ENCODE measurements at regions of chr17 and their contacts with region 1.

Region 1: DNA sequence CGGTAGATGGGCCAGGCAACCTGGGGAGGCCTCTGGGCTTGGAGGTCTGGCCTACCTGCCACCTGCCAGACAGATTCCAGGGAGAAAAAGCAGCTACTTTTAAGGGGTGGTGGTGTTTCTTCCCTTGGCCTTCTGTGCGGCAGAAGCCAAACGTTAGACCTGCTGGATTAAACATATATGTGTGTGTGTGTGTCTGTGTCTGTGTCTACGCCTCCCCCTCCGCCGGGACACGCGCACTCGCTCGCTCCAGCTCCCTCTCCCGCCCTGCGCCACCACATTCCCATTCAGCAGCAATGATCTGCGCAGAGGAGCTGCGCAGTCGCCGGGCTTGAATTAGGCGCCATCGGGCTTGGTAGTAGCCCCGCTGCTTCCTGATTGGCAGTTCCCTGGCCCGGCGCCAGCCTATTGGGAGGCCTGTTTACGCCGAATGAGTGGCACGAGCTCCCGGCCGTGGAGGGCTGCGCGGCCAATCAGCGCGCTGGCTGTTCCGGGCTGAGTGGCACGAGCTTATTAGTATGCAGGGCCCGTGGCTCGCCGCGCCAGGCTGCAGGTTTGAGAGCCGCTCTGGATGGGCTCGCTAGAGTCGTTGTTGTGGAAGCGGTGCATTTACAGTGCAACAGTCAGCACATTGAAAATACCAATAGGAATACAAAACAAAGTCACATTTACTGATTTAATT is at the start of gene BAHCC1:
- DNase-seq: peak; percentile 100
- H3K4me3 ChIP-seq: peak within 1 kb of the TSS; percentile 74
- H3K27ac ChIP-seq: peak within 1 kb of the TSS; percentile 75
- H3K4me1 ChIP-seq: peaks cover 42% of the 10 kb centered on the region
- CTCF ChIP-seq: no peak
- total RNA-seq, gene BAHCC1: 1.4 and 5.2 TPM in 2 replicates

Region 2: GRCh38 chr17:81294856-81295680 is 100.0 kb before region 1 on chr17 and contains the start of gene SLC38A10:
- CTCF ChIA-PET with region 1: interaction called, 3 read pairs
- POLR2A ChIA-PET with region 1: interaction called, 4 read pairs
- intact Hi-C with region 1: loop called (anchors 5 kb)
- DNase-seq: peak; percentile 95
- H3K4me3 ChIP-seq: peak within 1 kb of the TSS; percentile 78
- H3K27ac ChIP-seq: peak within 1 kb of the TSS; percentile 49
- H3K4me1 ChIP-seq: peaks cover 28% of the 10 kb centered on the region
- CTCF ChIP-seq: peak; percentile 37; the same call in 1 of the 2 replicates
- total RNA-seq, gene SLC38A10: 50.5 and 56.0 TPM in 2 replicates

Region 3: DNA sequence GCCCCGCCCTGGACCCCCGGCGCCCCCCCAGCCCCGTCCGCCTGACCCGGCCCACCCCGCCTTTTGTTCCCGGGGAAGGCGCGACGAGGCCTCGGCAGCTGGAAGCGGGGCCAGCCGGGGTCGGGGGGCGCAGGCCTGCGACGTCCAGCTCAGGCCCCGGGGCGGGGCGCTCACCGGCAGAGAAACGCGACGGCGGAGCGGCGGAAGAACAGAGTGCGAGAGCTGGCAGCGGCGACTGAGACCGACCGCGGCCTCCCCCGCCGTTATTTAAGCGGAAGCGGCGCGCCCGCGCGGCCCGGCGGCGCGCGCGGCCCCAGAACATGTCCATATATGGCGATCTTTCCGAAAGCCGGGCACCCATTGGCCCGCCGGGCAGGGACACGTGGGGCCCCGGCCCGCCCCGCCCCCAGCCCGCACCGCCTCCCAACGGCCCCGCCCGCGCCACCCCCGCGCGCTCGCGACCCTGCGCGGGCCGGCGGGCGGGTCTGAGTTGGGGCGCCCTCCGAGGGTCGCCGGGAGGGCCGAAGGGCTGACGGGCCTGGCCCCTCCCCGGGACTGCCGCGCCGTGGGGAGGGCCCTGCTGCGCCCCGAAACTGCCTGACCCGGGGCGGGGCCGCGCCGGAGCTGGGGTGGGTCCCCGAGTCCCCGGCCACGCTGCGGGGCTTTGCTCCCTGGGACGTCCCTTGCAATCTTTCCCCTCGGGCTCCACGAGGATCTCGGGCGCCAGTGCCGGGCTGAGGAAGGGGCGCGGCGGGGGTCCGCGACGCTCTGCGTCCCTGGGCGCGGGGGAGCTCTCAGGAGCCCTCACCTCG is 117.7 kb after region 1 on chr17 and contains the start of gene ACTG1:
- CTCF ChIA-PET with region 1: no interaction called
- POLR2A ChIA-PET with region 1: interaction called, 5 read pairs
- intact Hi-C with region 1: loop called (anchors 10 kb)
- DNase-seq: peak; percentile 98
- H3K4me3 ChIP-seq: peak within 1 kb of the TSS; percentile 90
- H3K27ac ChIP-seq: peak within 1 kb of the TSS; percentile 89
- H3K4me1 ChIP-seq: peaks cover 58% of the 10 kb centered on the region
- CTCF ChIP-seq: no peak
- total RNA-seq, gene ACTG1: 2,245 and 2,707 TPM in 2 replicates

Region 4: DNA sequence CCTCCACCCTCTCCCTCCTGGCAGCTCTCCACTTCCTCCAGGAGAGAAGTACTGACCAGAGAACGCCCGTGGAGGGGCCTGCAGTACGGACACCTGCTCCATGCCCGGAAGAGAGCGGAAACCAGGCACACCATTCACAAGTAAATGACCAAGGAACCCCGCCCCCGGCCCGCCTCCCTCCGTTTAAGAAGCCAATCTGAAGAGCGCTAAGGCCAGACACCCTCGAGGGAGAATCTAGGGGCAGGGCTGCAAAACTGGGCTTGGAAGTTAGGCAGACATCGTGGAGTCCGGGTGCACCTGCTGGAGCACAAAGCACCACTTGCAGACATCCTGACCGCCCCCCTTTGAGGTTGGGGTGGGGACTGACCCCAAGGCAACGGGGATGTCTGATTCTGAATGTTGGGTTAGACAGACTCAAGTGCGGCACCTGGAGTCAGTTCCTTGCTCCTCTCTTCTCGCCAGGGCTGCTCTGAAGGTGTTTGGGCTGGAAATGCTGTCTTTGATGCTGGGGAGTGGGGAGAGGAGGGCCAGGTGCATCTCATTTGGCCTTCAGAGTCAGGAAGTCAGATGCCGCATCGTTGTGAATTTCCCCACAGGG is 158.1 kb after region 1 on chr17:
- CTCF ChIA-PET with region 1: no interaction called
- POLR2A ChIA-PET with region 1: interaction called, 4 read pairs
- intact Hi-C with region 1: loop called (anchors 2 kb)
- DNase-seq: peak; percentile 94
- H3K4me3 ChIP-seq: peak overlapping the region; percentile 88
- H3K27ac ChIP-seq: peak overlapping the region; percentile 80
- H3K4me1 ChIP-seq: peaks cover 30% of the 10 kb centered on the region
- CTCF ChIP-seq: peak; percentile 59

Region 5: GRCh38 chr17:81601525-81602120 is 206.6 kb after region 1 on chr17:
- CTCF ChIA-PET with region 1: interaction called, 3 read pairs
- POLR2A ChIA-PET with region 1: interaction called, 4 read pairs
- intact Hi-C with region 1: loop called (anchors 10 kb)
- DNase-seq: peak; percentile 82
- H3K4me3 ChIP-seq: no peak overlapping the region
- H3K27ac ChIP-seq: peak overlapping the region; percentile 12
- H3K4me1 ChIP-seq: peaks cover 28% of the 10 kb centered on the region
- CTCF ChIP-seq: peak; percentile 100